Natural killer cell (primary cell): ENCODE measurements at regions of chr17 and their contacts with region 1.

Region 1: GRCh38 chr17:64420143-64420971 is 28.6 kb upstream of the MILR1 start:
- DNase-seq: peak in 1 of 2 donors; percentile 87
- ATAC-seq: peak; percentile 87 to 88 (median 87)
- H3K4me3 ChIP-seq: no peak overlapping the region
- H3K4me3 Mint-ChIP-seq: no peak overlapping the region
- H3K27ac ChIP-seq: no peak overlapping the region
- H3K27ac Mint-ChIP-seq: no peak overlapping the region
- H3K4me1 ChIP-seq: peaks cover 3% of the 10 kb centered on the region
- H3K4me1 Mint-ChIP-seq: no peaks in the 10 kb centered on the region
- H3K27me3 ChIP-seq: no peaks in the 10 kb centered on the region
- H3K27me3 Mint-ChIP-seq: peaks cover 0 to under 1% of the 10 kb centered on the region in 2 donors
- CTCF ChIP-seq: peak; percentile 79

Region 2: GRCh38 chr17:64306850-64307463 is 113.4 kb before region 1 on chr17:
- intact Hi-C with region 1: loop called (anchors 1 kb)
- DNase-seq: peak; percentile 59 to 89
- ATAC-seq: peak; percentile 67 to 77 (median 69)
- H3K4me3 ChIP-seq: no peak overlapping the region
- H3K4me3 Mint-ChIP-seq: no peak overlapping the region
- H3K27ac ChIP-seq: no peak overlapping the region
- H3K27ac Mint-ChIP-seq: no peak overlapping the region
- H3K4me1 ChIP-seq: no peaks in the 10 kb centered on the region
- H3K4me1 Mint-ChIP-seq: no peaks in the 10 kb centered on the region
- H3K27me3 ChIP-seq: no peaks in the 10 kb centered on the region
- H3K27me3 Mint-ChIP-seq: no peaks in the 10 kb centered on the region
- CTCF ChIP-seq: peak; percentile 90

Region 3: GRCh38 chr17:64320613-64321553 is 99.5 kb before region 1 on chr17:
- intact Hi-C with region 1: loop called (anchors 1 kb)
- DNase-seq: peak; percentile 39 to 82
- ATAC-seq: peak; percentile 58 to 72 (median 61)
- H3K4me3 ChIP-seq: no peak overlapping the region
- H3K4me3 Mint-ChIP-seq: peak overlapping the region; percentile 62
- H3K27ac ChIP-seq: no peak overlapping the region
- H3K27ac Mint-ChIP-seq: peak overlapping the region; percentile 44 to 45
- H3K4me1 ChIP-seq: peaks cover 20% of the 10 kb centered on the region
- H3K4me1 Mint-ChIP-seq: peaks cover 35 to 40% of the 10 kb centered on the region in 2 donors
- H3K27me3 ChIP-seq: no peaks in the 10 kb centered on the region
- H3K27me3 Mint-ChIP-seq: no peaks in the 10 kb centered on the region
- CTCF ChIP-seq: peak; percentile 91

Region 4: GRCh38 chr17:64491034-64491859 is 70.9 kb after region 1 on chr17:
- intact Hi-C with region 1: loop called (anchors 1 kb)
- DNase-seq: peak in 1 of 2 donors; percentile 75
- ATAC-seq: peak; percentile 42 to 81 (median 64)
- H3K4me3 ChIP-seq: no peak overlapping the region
- H3K4me3 Mint-ChIP-seq: no peak overlapping the region
- H3K27ac ChIP-seq: no peak overlapping the region
- H3K27ac Mint-ChIP-seq: peak overlapping the region; percentile 18 to 23
- H3K4me1 ChIP-seq: peaks cover 18% of the 10 kb centered on the region
- H3K4me1 Mint-ChIP-seq: peaks cover 15 to 19% of the 10 kb centered on the region in 2 donors
- H3K27me3 ChIP-seq: no peaks in the 10 kb centered on the region
- H3K27me3 Mint-ChIP-seq: no peaks in the 10 kb centered on the region
- CTCF ChIP-seq: peak; percentile 51

Region 5: GRCh38 chr17:64506576-64507477 is 86.5 kb after region 1 on chr17 and contains the start of gene CEP95:
- intact Hi-C with region 1: loop called (anchors 1 kb)
- DNase-seq: peak; percentile 95 to 98
- ATAC-seq: peak; percentile 58 to 83 (median 72)
- H3K4me3 ChIP-seq: peak within 1 kb of the TSS; percentile 85
- H3K4me3 Mint-ChIP-seq: peak within 1 kb of the TSS; percentile 95
- H3K27ac ChIP-seq: peak within 1 kb of the TSS; percentile 94
- H3K27ac Mint-ChIP-seq: peak within 1 kb of the TSS; percentile 97 to 99
- H3K4me1 ChIP-seq: peaks cover 12% of the 10 kb centered on the region
- H3K4me1 Mint-ChIP-seq: peaks cover 62 to 67% of the 10 kb centered on the region in 2 donors
- H3K27me3 ChIP-seq: no peaks in the 10 kb centered on the region
- H3K27me3 Mint-ChIP-seq: no peaks in the 10 kb centered on the region
- CTCF ChIP-seq: no peak
- total RNA-seq, gene CEP95: 152 to 187 (median 186) TPM

Region 6: DNA sequence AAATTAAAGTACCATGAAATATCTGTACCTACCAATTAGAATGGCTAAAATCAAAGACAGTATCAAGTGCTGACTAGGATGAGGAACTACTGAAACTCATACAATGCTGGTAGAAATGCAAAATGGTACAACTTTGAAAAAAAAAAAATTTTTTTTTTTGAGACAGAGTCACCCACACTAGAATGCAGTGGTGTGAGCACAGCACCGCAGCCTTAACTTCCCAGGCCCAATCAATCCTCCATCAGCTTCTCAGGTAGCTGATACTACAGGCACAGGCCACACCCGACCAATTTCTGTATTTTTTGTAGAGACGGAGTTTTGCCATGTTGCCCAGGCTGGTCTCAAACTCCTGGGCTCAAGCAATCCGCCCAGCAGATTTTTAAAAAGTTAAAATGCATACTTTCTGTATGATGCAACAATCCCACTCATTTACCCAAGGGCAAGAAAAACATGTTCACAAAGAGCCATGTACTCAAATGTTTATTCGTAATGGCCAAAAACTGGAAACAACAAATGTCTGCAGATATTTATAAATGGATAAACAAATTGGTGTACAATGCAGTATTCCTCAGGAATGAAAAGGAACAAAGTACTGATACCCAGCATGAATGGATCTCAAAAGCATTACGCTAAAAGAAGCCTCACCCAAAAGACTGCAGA is 233.1 kb after region 1 on chr17:
- intact Hi-C with region 1: loop called (anchors 1 kb)
- DNase-seq: no peak
- ATAC-seq: no peak
- H3K4me3 ChIP-seq: no peak overlapping the region
- H3K4me3 Mint-ChIP-seq: no peak overlapping the region
- H3K27ac ChIP-seq: no peak overlapping the region
- H3K27ac Mint-ChIP-seq: no peak overlapping the region
- H3K4me1 ChIP-seq: peaks cover 24% of the 10 kb centered on the region
- H3K4me1 Mint-ChIP-seq: peaks cover 56 to 62% of the 10 kb centered on the region in 2 donors
- H3K27me3 ChIP-seq: no peaks in the 10 kb centered on the region
- H3K27me3 Mint-ChIP-seq: no peaks in the 10 kb centered on the region
- CTCF ChIP-seq: no peak

Region 7: GRCh38 chr17:64736804-64737492 is 316.6 kb after region 1 on chr17:
- intact Hi-C with region 1: loop called (anchors 1 kb)
- DNase-seq: peak; percentile 25 to 66
- ATAC-seq: peak; percentile 57 to 80 (median 79)
- H3K4me3 ChIP-seq: no peak overlapping the region
- H3K4me3 Mint-ChIP-seq: no peak overlapping the region
- H3K27ac ChIP-seq: no peak overlapping the region
- H3K27ac Mint-ChIP-seq: peak overlapping the region in 1 of 2 donors; percentile 3
- H3K4me1 ChIP-seq: no peaks in the 10 kb centered on the region
- H3K4me1 Mint-ChIP-seq: peaks cover 9 to 10% of the 10 kb centered on the region in 2 donors
- H3K27me3 ChIP-seq: no peaks in the 10 kb centered on the region
- H3K27me3 Mint-ChIP-seq: no peaks in the 10 kb centered on the region
- CTCF ChIP-seq: peak; percentile 48